Lower lobe of right lung (tissue), 2 donors: ENCODE measurements at regions of chr16 and their contacts with region 1.

Region 1: DNA sequence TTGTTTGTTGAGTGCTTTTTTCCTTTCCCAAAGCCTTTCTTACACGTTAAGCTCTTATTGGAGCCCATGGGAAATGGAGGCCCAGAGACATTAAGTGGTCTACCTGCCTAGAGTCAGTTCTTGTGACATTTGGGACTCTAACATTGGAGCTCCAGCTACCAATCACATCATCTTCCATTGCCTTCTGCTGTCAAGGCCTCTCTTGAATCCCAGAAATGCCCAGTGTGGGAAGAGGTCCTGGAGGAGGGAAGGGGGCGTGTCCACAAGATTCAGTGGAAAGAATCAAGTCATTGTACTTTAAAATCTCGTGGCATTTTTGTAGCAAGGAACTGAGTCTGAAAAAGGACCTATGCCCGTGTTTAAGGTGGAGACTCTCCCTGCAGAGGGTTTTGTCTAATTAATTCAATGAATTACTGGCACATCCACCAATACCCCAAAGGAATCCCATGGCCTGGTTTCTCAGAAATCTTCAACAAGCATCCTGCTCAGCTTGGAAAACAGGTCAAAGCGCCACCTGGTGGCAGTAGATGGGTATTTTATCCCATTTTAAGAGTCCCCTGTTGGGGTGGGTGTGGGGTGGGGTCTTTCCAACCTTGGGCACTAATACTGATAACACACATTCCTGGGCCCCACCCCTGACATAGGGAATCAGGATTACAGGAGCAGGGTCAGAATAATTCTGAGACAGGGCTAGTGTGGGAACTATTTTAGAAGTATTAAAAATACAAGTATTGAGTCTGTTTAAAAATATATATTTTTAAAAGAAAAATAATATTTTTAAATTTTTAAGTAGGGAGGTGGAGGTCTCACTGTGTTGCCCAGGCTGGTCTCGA is 24.6 kb downstream of the GPT2 start:
- DNase-seq: no peak
- ATAC-seq: peak; percentile 46 to 77
- H3K4me3 ChIP-seq: no peak overlapping the region
- H3K27ac ChIP-seq: no peak overlapping the region
- H3K4me1 ChIP-seq: no peaks in the 10 kb centered on the region
- H3K27me3 ChIP-seq: no peaks in the 10 kb centered on the region
- CTCF ChIP-seq: peak; percentile 75

Region 2: GRCh38 chr16:46853713-46854443 is 54.9 kb before region 1 on chr16:
- intact Hi-C with region 1: loop called (anchors 5 kb)
- DNase-seq: peak; percentile 82
- ATAC-seq: peak; percentile 82 to 86
- H3K4me3 ChIP-seq: no peak overlapping the region
- H3K27ac ChIP-seq: no peak overlapping the region
- H3K4me1 ChIP-seq: no peaks in the 10 kb centered on the region
- H3K27me3 ChIP-seq: no peaks in the 10 kb centered on the region
- CTCF ChIP-seq: peak; percentile 85